Activated naive CD8-positive, alpha-beta T cell treated with anti-CD3 and anti-CD28 coated beads, Interleukin-2, amount 10 ng/mL, durations not matched to agents 7 days and 5 days (primary cell): ENCODE measurements at regions of chr20 and their contacts with region 1.

Region 1: GRCh38 chr20:34516247-34517113 is at the start of gene DYNLRB1:
- DNase-seq: peak; percentile 93
- ATAC-seq: peak; percentile 86
- H3K4me3 Mint-ChIP-seq: peak within 1 kb of the TSS; percentile 98
- H3K27ac Mint-ChIP-seq: peak within 1 kb of the TSS; percentile 96
- H3K4me1 Mint-ChIP-seq: peaks cover 22% of the 10 kb centered on the region
- H3K27me3 Mint-ChIP-seq: no peaks in the 10 kb centered on the region
- total RNA-seq, gene DYNLRB1: 91.2 to 96.8 TPM

Region 2: DNA sequence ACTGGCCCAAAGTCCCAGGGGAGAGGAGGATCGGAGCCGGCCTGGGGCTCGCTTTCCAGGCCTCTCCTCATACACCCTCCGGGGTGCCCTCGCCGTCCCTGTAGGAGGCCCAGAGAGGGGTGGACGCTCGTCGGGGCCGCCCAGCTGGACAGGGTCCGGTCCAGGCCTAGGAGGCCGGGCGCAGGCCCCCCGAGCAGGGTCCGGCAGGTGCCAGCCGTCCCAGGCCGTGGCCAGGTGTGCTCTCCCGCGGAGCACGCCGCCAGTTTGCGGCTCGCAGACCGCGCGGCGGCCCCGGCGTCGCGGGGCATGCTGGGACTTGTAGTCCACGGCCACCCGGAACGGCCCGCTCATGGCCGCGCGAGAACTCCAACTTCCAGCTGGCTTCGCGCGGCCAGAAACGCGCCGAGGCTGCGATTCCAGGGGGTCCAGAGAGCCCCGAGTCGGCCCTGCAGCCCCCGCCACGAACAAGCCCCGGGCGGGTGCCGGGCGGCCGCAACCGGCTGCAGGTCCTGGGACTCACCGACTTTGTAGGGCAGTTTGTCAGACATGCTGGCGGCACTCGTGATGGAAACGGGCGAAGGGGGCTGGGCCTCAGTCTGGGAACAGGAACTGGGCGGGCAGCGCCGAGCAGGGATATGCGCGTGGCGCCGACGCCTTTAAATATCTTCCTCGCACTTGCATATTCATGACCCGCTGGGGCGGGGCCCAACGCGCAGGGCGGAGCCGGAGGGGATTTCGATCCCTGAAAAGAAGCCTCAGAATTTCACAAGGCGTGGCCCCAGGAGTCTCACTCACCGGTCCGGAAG is 213.6 kb before region 1 on chr20 and contains the start of gene AHCY:
- POLR2A ChIA-PET with region 1: interaction called, 16 read pairs
- DNase-seq: peak; percentile 95
- ATAC-seq: peak; percentile 96
- H3K4me3 Mint-ChIP-seq: peak within 1 kb of the TSS; percentile 92
- H3K27ac Mint-ChIP-seq: peak within 1 kb of the TSS; percentile 88
- H3K4me1 Mint-ChIP-seq: peaks cover 20% of the 10 kb centered on the region
- H3K27me3 Mint-ChIP-seq: peaks cover 6% of the 10 kb centered on the region
- total RNA-seq, gene AHCY: 51.8 to 55.0 TPM

Region 3: DNA sequence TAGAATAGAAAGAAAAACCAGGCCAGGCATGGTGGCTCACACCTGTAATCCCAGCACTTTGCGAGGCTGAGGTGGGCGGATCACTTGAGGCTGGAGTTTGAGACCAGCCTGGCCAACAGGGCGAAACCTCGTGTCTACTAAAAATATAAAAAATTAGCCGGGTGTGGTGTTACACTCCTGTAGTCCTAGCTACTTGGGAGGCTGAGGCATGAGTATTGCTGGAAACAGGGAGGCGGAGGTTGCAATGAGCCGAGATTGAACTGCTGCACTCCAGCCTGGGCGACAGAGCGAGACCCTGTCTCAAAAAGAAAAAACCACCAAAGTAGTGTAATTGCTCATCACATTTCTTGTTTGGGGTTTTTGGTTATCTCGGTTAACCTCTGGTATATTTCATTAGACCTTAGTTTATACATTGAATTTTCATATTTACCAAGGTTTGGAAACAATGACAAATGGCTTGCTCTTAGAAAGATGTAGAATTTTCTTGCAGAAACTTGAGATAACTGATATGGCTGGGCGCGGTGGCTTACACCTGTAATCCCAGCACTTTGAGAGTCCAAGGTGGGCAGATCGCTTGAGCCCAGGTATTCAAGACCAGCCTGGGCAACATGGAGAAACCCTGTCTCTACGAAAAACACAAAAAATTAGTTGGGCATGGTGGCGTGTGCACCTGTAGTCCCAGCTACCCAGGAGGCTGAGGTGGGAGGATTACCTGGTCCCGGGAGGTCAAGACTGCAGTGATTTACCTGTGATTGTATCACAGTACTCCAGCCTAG is 139.2 kb before region 1 on chr20:
- POLR2A ChIA-PET with region 1: no interaction called
- DNase-seq: no peak
- ATAC-seq: no peak
- H3K4me3 Mint-ChIP-seq: no peak overlapping the region
- H3K27ac Mint-ChIP-seq: no peak overlapping the region
- H3K4me1 Mint-ChIP-seq: peaks cover 11% of the 10 kb centered on the region
- H3K27me3 Mint-ChIP-seq: no peaks in the 10 kb centered on the region

Region 4: GRCh38 chr20:34549291-34549928 is 32.9 kb after region 1 on chr20:
- POLR2A ChIA-PET with region 1: no interaction called
- DNase-seq: no peak
- ATAC-seq: no peak
- H3K4me3 Mint-ChIP-seq: no peak overlapping the region
- H3K27ac Mint-ChIP-seq: no peak overlapping the region
- H3K4me1 Mint-ChIP-seq: peaks cover 4% of the 10 kb centered on the region
- H3K27me3 Mint-ChIP-seq: no peaks in the 10 kb centered on the region